ENCODE measurements at regions of chr5 and their contacts with region 1.

Region 1: DNA sequence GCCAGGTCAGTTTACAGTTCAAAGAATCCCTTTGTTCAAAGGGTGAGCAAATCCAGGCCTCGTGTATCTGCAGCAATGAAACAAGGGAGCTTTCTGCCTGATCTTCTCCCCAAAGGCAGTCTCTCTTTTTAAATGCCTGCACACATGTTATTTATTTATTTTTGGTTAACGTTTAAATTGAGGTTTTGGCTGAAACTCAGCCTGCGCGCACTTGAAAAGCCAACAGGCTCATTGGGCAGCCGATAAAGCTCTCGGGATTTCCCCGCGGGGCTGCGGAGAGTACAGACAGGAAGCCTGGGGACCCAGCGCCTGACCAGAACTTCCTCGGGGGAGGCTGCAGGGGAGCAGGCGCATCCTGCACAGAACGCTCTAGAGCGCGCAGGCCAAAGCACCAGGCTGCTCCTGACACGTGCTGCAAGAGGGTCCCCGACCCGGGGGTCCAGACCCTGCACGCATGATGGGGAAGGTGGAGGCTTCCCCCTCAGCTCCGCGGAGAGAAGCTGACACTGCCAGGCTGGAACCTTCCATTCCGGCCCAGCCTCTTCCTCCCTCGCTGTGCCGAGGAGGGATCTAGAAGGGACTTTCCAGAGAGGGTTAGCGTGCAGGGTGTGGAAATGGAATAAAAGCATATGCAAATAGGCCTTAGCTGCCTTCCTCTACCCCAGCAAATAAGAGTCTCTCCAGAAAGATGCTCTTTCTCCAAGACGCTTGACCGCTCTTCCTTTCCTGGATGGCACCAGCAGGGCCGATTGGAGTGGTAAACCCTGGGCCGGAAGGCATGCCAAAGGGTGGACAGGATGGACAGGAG is 46.1 kb downstream of the PTTG1 start:
- DNase-seq: peak; percentile 96
- ATAC-seq: peak; percentile 80
- H3K4me3 ChIP-seq: peak overlapping the region; percentile 88
- H3K27ac ChIP-seq: peak overlapping the region; percentile 96
- H3K4me1 ChIP-seq: peaks cover 35% of the 10 kb centered on the region
- H3K27me3 ChIP-seq: no peaks in the 10 kb centered on the region
- CTCF ChIP-seq: no peak
- EP300 ChIP-seq: peak; percentile 84 to 95
- POLR2A ChIP-seq: peak; percentile 91
- RAD21 ChIP-seq: peak; percentile 8; the same call in 1 of the 2 replicates

Region 2: DNA sequence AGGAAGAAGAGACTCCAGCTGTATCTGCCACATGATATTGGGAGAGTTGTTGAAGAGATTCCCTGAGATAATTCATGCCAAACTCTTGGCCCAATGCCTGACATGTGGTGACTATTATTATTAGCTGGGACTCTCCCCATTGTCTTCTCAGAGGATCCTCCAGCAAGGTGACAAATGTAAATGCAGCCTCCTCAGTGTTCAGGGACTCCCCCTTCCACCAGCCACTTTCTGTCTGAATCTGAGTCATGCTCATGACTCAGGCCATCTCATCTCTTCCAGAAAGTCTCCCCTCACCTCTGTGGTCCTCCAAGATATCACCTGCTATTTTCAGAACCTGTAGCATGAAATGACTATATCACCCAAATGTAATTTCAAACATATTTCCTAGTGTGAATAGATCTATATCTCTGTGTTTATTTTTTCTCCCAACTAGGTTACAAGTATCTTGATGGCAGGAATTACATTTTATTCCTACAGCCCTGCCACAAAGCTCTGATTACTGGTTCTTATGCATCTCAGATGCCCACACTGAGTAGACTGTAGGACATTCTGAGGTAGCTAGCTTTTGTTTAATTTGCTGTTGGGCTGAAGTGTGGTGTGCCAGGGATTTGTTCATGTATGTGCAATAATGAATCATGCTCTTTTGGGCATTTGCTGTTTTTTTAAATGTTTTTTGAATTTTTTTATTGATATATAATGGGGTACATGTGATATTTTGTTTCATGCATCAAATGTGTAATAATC is 1010.9 kb before region 1 on chr5:
- CTCF ChIA-PET with region 1: no interaction called
- POLR2A ChIA-PET with region 1: no interaction called
- RAD21 ChIA-PET with region 1: no interaction called
- SMC1A ChIA-PET with region 1: interaction called, 3 read pairs
- in situ Hi-C with region 1: no loop called
- intact Hi-C with region 1: loop called (anchors 5 kb)
- DNase-seq: peak; percentile 96
- ATAC-seq: peak; percentile 70
- H3K4me3 ChIP-seq: peak overlapping the region; percentile 14; the same call in 1 of the 2 replicates
- H3K27ac ChIP-seq: peak overlapping the region; percentile 41
- H3K4me1 ChIP-seq: peaks cover 58% of the 10 kb centered on the region
- H3K27me3 ChIP-seq: no peaks in the 10 kb centered on the region
- CTCF ChIP-seq: no peak
- EP300 ChIP-seq: peak; percentile 97
- POLR2A ChIP-seq: no peak
- RAD21 ChIP-seq: no peak

Region 3: DNA sequence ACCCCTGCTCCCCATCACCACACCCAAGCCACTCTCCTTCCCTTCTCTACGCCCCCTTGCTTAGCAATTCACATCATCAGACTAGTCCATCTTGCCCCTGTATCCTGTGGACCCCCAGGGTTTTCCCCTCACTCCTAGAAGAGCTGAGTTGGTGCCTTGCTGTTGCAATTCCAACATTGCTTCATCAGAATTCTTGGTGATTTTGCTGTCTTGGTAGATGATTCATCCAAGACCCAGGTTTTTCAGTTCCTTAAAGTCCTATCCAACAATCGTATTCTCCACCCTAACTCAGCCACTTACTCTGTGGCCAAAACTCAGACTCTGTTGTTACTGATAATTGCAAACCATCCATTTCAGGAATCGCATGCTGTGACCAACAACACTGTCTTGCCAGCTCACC is 134.0 kb before region 1 on chr5:
- CTCF ChIA-PET with region 1: no interaction called
- POLR2A ChIA-PET with region 1: no interaction called
- RAD21 ChIA-PET with region 1: no interaction called
- SMC1A ChIA-PET with region 1: no interaction called
- in situ Hi-C with region 1: no loop called
- intact Hi-C with region 1: no loop called
- DNase-seq: no peak
- ATAC-seq: no peak
- H3K4me3 ChIP-seq: no peak overlapping the region
- H3K27ac ChIP-seq: no peak overlapping the region
- H3K4me1 ChIP-seq: no peaks in the 10 kb centered on the region
- H3K27me3 ChIP-seq: no peaks in the 10 kb centered on the region; a peak in 1 of 4 replicates
- CTCF ChIP-seq: no peak
- EP300 ChIP-seq: no peak
- POLR2A ChIP-seq: no peak
- RAD21 ChIP-seq: no peak

Region 4: GRCh38 chr5:160434022-160434531 is 33.7 kb before region 1 on chr5:
- CTCF ChIA-PET with region 1: interaction called, 230 read pairs
- POLR2A ChIA-PET with region 1: interaction called, 156 read pairs
- RAD21 ChIA-PET with region 1: interaction called, 329 read pairs
- SMC1A ChIA-PET with region 1: interaction called, 511 read pairs
- in situ Hi-C with region 1: no loop called
- intact Hi-C with region 1: loop called (anchors 1 kb)
- DNase-seq: peak; percentile 86
- ATAC-seq: peak; percentile 81
- H3K4me3 ChIP-seq: peak overlapping the region; percentile 56; the same call in 1 of the 2 replicates
- H3K27ac ChIP-seq: peak overlapping the region; percentile 26
- H3K4me1 ChIP-seq: peaks cover 31% of the 10 kb centered on the region
- H3K27me3 ChIP-seq: no peaks in the 10 kb centered on the region
- CTCF ChIP-seq: no peak
- EP300 ChIP-seq: peak; percentile 59 to 62; a peak in 2 of 4 replicates
- POLR2A ChIP-seq: peak; percentile 33; the same call in 1 of the 2 replicates
- RAD21 ChIP-seq: no peak

Region 5: GRCh38 chr5:160452795-160453194 is 15.0 kb before region 1 on chr5:
- CTCF ChIA-PET with region 1: interaction called, 13 read pairs
- POLR2A ChIA-PET with region 1: interaction called, 47 read pairs
- RAD21 ChIA-PET with region 1: interaction called, 67 read pairs
- SMC1A ChIA-PET with region 1: interaction called, 81 read pairs
- in situ Hi-C with region 1: no loop called
- intact Hi-C with region 1: no loop called
- DNase-seq: no peak
- ATAC-seq: peak; percentile 7; the same call in 1 of the 3 replicates
- H3K4me3 ChIP-seq: no peak overlapping the region
- H3K27ac ChIP-seq: peak overlapping the region; percentile 29
- H3K4me1 ChIP-seq: peaks cover 55% of the 10 kb centered on the region
- H3K27me3 ChIP-seq: no peaks in the 10 kb centered on the region
- CTCF ChIP-seq: no peak
- EP300 ChIP-seq: 0 out of 4 replicates have a peak, but pooled peaks of 1 of the 2 experiments have one; percentile 9
- POLR2A ChIP-seq: no peak
- RAD21 ChIP-seq: no peak

Region 6: GRCh38 chr5:160486573-160486972 is 18.8 kb after region 1 on chr5:
- CTCF ChIA-PET with region 1: interaction called, 6 read pairs
- POLR2A ChIA-PET with region 1: interaction called, 6 read pairs
- RAD21 ChIA-PET with region 1: interaction called, 3 read pairs
- SMC1A ChIA-PET with region 1: interaction called, 13 read pairs
- in situ Hi-C with region 1: no loop called
- intact Hi-C with region 1: no loop called
- DNase-seq: no peak
- ATAC-seq: peak; percentile 82
- H3K4me3 ChIP-seq: no peak overlapping the region
- H3K27ac ChIP-seq: peak overlapping the region; percentile 53
- H3K4me1 ChIP-seq: peaks cover 21% of the 10 kb centered on the region
- H3K27me3 ChIP-seq: no peaks in the 10 kb centered on the region
- CTCF ChIP-seq: no peak
- EP300 ChIP-seq: peak; percentile 29 to 52; a peak in 2 of 4 replicates
- POLR2A ChIP-seq: no peak
- RAD21 ChIP-seq: no peak